Activated B cell treated with CpG ODN at 0.5 μM for 24 hours (primary cell): ENCODE measurements at regions of chr1 and their contacts with region 1.

Region 1: GRCh38 chr1:13699936-13700520 is at the start of gene PRDM2:
- DNase-seq: peak; percentile 77
- ATAC-seq: peak; percentile 30
- H3K4me3 Mint-ChIP-seq: peak within 1 kb of the TSS; percentile 91
- H3K27ac Mint-ChIP-seq: peak within 1 kb of the TSS; percentile 98
- H3K4me1 Mint-ChIP-seq: peaks cover 60% of the 10 kb centered on the region
- H3K27me3 Mint-ChIP-seq: no peaks in the 10 kb centered on the region
- CTCF ChIP-seq: no peak
- total RNA-seq, gene PRDM2: 183 and 194 TPM in 2 replicates

Region 2: GRCh38 chr1:13642306-13643004 is 57.6 kb before region 1 on chr1:
- CTCF ChIA-PET with region 1: no interaction called
- POLR2A ChIA-PET with region 1: interaction called, 5 read pairs
- intact Hi-C with region 1: loop called (anchors 1 kb)
- DNase-seq: no peak
- ATAC-seq: peak; percentile 86
- H3K4me3 Mint-ChIP-seq: peak overlapping the region; percentile 62
- H3K27ac Mint-ChIP-seq: peak overlapping the region; percentile 85
- H3K4me1 Mint-ChIP-seq: peaks cover 46% of the 10 kb centered on the region
- H3K27me3 Mint-ChIP-seq: no peaks in the 10 kb centered on the region
- CTCF ChIP-seq: no peak

Region 3: GRCh38 chr1:13675151-13675651 is 24.8 kb before region 1 on chr1:
- CTCF ChIA-PET with region 1: no interaction called
- POLR2A ChIA-PET with region 1: interaction called, 14 read pairs
- intact Hi-C with region 1: no loop called
- DNase-seq: no peak
- ATAC-seq: no peak
- H3K4me3 Mint-ChIP-seq: no peak overlapping the region
- H3K27ac Mint-ChIP-seq: no peak overlapping the region
- H3K4me1 Mint-ChIP-seq: peaks cover 20% of the 10 kb centered on the region
- H3K27me3 Mint-ChIP-seq: no peaks in the 10 kb centered on the region
- CTCF ChIP-seq: no peak

Region 4: GRCh38 chr1:13725714-13726175 is 25.7 kb after region 1 on chr1:
- CTCF ChIA-PET with region 1: interaction called, 29 read pairs
- POLR2A ChIA-PET with region 1: interaction called, 440 read pairs
- intact Hi-C with region 1: loop called (anchors 1 kb)
- DNase-seq: no peak
- ATAC-seq: peak; percentile 36
- H3K4me3 Mint-ChIP-seq: peak overlapping the region; percentile 50
- H3K27ac Mint-ChIP-seq: peak overlapping the region; percentile 97
- H3K4me1 Mint-ChIP-seq: peaks cover 88% of the 10 kb centered on the region
- H3K27me3 Mint-ChIP-seq: no peaks in the 10 kb centered on the region
- CTCF ChIP-seq: no peak

Region 5: DNA sequence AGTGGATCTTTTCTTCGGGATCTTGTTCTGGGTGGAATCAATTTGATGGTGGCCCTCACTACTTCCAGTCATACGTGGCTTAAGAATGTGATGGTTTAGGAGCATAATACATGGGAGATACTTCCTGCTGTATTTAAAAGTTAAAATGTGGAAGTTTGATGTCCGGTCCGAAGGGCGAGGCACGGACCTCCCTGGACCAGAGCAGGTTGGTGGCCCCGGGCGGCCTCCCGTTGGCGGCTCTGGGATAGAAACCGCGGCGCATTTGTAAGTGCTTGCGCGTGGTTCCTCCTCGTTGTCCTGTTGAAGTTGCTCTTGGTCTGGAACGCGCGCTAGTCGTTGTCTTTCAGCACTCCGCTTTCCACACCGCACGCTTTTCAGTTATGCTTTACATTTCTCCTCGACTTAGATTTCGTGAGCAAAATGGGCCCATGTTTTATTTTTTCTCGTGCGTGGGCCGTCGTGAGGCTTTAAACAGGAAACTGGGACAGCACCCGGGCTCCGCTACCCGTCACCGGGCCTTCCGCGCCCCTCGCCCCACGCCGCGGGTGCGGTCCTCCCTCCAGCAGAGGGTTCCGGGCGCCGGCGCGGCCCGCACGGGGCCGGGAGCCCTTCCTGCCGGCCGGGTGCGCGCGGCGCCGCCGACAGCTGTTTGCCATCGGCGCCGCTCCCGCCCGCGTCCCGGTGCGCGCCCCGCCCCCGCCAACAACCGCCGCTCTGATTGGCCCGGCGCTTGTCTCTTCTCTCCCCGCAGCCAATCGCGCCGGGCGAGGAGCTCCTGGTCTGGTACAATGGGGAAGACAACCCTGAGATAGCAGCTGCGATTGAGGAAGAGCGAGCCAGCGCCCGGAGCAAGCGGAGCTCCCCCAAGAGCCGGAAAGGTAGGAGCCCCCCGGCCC is 48.8 kb after region 1 on chr1:
- CTCF ChIA-PET with region 1: no interaction called
- POLR2A ChIA-PET with region 1: interaction called, 64 read pairs
- intact Hi-C with region 1: loop called (anchors 1 kb)
- DNase-seq: peak; percentile 96
- ATAC-seq: peak; percentile 88
- H3K4me3 Mint-ChIP-seq: peak overlapping the region; percentile 85
- H3K27ac Mint-ChIP-seq: peak overlapping the region; percentile 94
- H3K4me1 Mint-ChIP-seq: peaks cover 55% of the 10 kb centered on the region
- H3K27me3 Mint-ChIP-seq: no peaks in the 10 kb centered on the region
- CTCF ChIP-seq: no peak

Region 6: GRCh38 chr1:15033264-15033663 is 1333.2 kb after region 1 on chr1:
- CTCF ChIA-PET with region 1: no interaction called
- POLR2A ChIA-PET with region 1: no interaction called
- intact Hi-C with region 1: no loop called
- DNase-seq: no peak
- ATAC-seq: no peak
- H3K4me3 Mint-ChIP-seq: no peak overlapping the region
- H3K27ac Mint-ChIP-seq: no peak overlapping the region
- H3K4me1 Mint-ChIP-seq: peaks cover 7% of the 10 kb centered on the region
- H3K27me3 Mint-ChIP-seq: no peaks in the 10 kb centered on the region
- CTCF ChIP-seq: no peak